ENCODE measurements at regions of chr12 and their contacts with region 1.

Region 1: GRCh38 chr12:66269757-66270383 is 32.4 kb upstream of the HELB start:
- DNase-seq: no peak
- ATAC-seq: no peak
- H3K4me3 ChIP-seq: no peak overlapping the region
- H3K27ac ChIP-seq: no peak overlapping the region
- H3K4me1 ChIP-seq: no peaks in the 10 kb centered on the region
- H3K27me3 ChIP-seq: no peaks in the 10 kb centered on the region
- CTCF ChIP-seq: peak; percentile 11 to 46 (median 23)
- POLR2A ChIP-seq: no peak

Region 2: DNA sequence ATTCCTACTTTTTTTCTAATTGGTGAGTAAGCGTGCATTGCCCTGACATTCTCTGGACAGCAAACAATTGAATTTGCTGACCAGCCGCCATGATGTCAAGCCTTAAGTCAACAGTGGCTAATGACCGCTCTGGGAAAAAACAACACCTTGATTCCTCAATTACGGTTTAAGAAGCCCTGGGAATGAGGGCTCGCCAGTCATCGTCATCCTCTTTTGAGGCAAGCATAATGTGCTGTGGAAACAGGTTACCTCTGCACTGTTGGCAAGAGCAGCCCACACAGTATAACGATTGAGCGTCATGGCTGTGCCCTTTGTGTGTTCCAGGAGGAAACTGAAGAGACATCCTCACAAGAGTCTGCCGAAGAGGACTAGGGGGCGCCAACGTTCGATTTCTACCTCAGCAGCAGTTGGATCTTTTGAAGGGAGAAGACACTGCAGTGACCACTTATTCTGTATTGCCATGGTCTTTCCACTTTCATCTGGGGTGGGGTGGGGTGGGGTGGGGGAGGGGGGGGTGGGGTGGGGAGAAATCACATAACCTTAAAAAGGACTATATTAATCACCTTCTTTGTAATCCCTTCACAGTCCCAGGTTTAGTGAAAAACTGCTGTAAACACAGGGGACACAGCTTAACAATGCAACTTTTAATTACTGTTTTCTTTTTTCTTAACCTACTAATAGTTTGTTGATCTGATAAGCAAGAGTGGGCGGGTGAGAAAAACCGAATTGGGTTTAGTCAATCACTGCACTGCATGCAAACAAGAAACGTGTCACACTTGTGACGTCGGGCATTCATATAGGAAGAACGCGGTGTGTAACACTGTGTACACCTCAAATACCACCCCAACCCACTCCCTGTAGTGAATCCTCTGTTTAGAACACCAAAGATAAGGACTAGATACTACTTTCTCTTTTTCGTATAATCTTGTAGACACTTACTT is 306.7 kb before region 1 on chr12:
- in situ Hi-C with region 1: no loop called
- intact Hi-C with region 1: no loop called
- DNase-seq: no peak
- ATAC-seq: no peak
- H3K4me3 ChIP-seq: no peak overlapping the region
- H3K27ac ChIP-seq: no peak overlapping the region
- H3K4me1 ChIP-seq: peaks cover 0 to 3% of the 10 kb centered on the region in 2 donors
- H3K27me3 ChIP-seq: no peaks in the 10 kb centered on the region
- CTCF ChIP-seq: no peak
- POLR2A ChIP-seq: no peak

Region 3: DNA sequence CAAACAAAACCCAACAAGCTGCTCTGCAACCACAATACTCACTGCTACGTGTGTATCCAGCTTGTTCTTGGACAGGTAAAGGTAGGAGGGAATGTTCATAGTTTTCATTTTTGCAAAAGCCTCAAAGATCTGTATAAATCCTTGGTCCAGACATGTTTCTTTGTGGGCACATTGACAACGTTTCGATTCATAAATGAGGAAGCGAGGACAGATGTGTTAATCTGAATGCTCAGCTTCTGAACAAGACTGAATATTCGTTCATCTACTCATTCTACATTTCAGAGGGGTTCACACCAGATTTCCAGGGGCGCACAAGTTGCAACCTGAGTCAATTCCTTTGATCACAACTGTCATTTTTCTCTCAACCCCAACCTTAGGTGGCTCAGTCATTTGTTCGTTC is 273.7 kb before region 1 on chr12:
- in situ Hi-C with region 1: no loop called
- intact Hi-C with region 1: no loop called
- DNase-seq: no peak
- ATAC-seq: no peak
- H3K4me3 ChIP-seq: no peak overlapping the region
- H3K27ac ChIP-seq: no peak overlapping the region
- H3K4me1 ChIP-seq: no peaks in the 10 kb centered on the region
- H3K27me3 ChIP-seq: no peaks in the 10 kb centered on the region
- CTCF ChIP-seq: no peak
- POLR2A ChIP-seq: no peak

Region 4: DNA sequence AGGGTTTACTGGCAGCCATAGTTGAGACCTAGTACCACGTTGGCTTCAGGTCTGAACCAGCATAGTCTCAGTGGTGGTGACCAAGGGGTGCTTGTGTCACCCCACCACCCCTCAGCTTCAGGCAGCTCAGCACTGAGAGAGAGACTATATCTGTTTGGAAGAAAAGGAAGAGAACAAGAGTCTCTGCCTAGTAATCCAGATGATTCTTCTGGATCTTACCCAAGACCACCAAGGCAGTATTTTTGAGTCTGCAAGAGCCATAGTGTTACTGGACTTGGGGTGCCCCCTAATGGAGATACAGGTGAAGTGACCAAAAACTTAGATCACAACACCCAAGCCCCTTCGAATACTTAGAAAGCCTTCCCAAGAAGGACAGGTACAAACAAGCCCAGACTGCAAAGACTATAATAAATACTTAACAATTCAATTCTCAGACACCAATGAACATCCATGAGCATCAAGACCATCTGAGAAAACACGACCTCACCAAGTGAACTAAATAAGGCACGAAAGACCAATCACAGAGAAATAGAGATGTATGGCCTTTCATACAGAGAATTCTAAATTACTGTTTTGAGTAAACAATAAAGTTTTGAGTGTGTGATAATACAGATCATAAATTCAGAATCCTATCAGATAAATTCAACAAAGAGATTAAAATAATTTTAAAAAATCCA is 139.5 kb after region 1 on chr12:
- in situ Hi-C with region 1: loop called in 2 of 4 experiments (anchors 10 to 25 kb)
- intact Hi-C with region 1: no loop called
- DNase-seq: no peak
- ATAC-seq: no peak
- H3K4me3 ChIP-seq: no peak overlapping the region
- H3K27ac ChIP-seq: no peak overlapping the region
- H3K4me1 ChIP-seq: no peaks in the 10 kb centered on the region
- H3K27me3 ChIP-seq: no peaks in the 10 kb centered on the region
- CTCF ChIP-seq: peak in 4 of 5 experiments; percentile 20 to 56 (median 35)
- POLR2A ChIP-seq: no peak

Region 5: DNA sequence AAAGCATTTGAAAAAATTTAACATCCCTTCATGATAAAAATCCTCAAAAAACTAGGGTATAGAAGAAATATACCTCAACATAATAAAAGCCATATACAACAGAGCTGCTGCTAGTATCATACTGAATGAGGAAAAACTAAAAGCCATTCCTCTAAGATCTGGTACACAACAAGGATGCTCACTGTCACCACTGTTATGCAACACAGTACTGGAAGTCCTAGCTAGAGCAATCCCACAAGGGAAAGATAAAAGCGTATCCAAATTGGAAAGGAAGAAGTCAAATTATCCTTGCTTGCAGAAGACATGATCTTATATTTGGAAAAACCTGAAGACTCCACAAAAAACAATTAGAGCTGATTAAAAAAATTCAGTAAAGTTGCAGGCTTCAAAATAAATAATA is 147.3 kb after region 1 on chr12:
- in situ Hi-C with region 1: loop called in 2 of 4 experiments (anchors 10 to 25 kb)
- intact Hi-C with region 1: no loop called
- DNase-seq: no peak
- ATAC-seq: no peak
- H3K4me3 ChIP-seq: no peak overlapping the region
- H3K27ac ChIP-seq: no peak overlapping the region
- H3K4me1 ChIP-seq: no peaks in the 10 kb centered on the region
- H3K27me3 ChIP-seq: no peaks in the 10 kb centered on the region
- CTCF ChIP-seq: no peak
- POLR2A ChIP-seq: no peak

Region 6: DNA sequence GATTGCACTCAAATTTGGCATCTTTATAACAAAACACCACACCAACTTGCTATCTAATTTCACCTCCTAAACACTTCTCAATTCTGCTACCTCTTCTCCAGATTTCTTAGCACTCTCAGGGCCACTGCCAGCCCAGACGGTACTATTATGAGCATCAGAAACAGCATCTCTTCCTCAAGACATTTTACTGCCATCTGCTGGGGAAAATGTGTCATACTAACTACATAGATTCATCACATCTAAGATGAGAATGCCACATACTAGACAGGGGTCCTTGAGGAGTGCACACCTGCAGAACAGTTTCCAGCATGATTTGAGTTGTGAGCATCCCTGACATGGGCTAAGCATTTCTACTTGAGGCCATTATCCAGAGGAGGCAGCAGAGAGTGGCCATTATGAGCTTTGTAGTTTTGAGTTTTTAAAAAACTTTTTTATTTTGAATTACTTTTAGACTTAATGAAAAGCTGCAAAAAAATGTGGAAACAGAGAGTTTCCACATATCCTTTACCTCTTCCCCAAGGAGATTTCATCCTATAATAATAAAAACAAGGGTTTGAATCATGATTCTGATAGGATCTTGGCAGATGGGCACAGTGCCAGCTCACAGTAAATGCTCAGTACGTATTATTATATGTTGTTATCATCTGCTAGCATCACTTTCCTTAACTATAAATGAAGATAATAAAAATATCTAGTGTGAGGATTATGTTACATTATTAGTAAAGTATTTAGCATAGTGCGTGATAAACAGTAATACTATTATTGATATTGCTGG is 424.2 kb after region 1 on chr12:
- in situ Hi-C with region 1: loop called in 1 of 4 experiments (anchors 25 kb)
- intact Hi-C with region 1: loop called (anchors 10 kb)
- DNase-seq: no peak
- ATAC-seq: peak; percentile 49 to 74
- H3K4me3 ChIP-seq: no peak overlapping the region
- H3K27ac ChIP-seq: no peak overlapping the region
- H3K4me1 ChIP-seq: no peaks in the 10 kb centered on the region
- H3K27me3 ChIP-seq: no peaks in the 10 kb centered on the region
- CTCF ChIP-seq: peak in 3 of 5 experiments; percentile 26 to 45 (median 35)
- POLR2A ChIP-seq: no peak

Measured in gastrocnemius medialis (tissue), 4 donors.